Dendritic cell treated with granulocyte-macrophage colony-stimulating factor and Interleukin-4, amounts not matched to agents 40 ng/mL and 50 ng/mL, for 4 days (primary cell): ENCODE measurements at regions of chr13 and their contacts with region 1.

Region 1: GRCh38 chr13:51502153-51502651 is 49.4 kb upstream of the INTS6 start:
- H3K4me3 Mint-ChIP-seq: no peak overlapping the region
- H3K27ac Mint-ChIP-seq: peak overlapping the region; percentile 48
- H3K4me1 Mint-ChIP-seq: peaks cover 27% of the 10 kb centered on the region
- H3K27me3 Mint-ChIP-seq: peaks cover 3% of the 10 kb centered on the region

Region 2: GRCh38 chr13:51542346-51543242 is 40.4 kb after region 1 on chr13:
- intact Hi-C with region 1: loop called (anchors 5 kb)
- H3K4me3 Mint-ChIP-seq: no peak overlapping the region
- H3K27ac Mint-ChIP-seq: peak overlapping the region; percentile 23
- H3K4me1 Mint-ChIP-seq: peaks cover 36% of the 10 kb centered on the region
- H3K27me3 Mint-ChIP-seq: peaks cover 6% of the 10 kb centered on the region

Region 3: DNA sequence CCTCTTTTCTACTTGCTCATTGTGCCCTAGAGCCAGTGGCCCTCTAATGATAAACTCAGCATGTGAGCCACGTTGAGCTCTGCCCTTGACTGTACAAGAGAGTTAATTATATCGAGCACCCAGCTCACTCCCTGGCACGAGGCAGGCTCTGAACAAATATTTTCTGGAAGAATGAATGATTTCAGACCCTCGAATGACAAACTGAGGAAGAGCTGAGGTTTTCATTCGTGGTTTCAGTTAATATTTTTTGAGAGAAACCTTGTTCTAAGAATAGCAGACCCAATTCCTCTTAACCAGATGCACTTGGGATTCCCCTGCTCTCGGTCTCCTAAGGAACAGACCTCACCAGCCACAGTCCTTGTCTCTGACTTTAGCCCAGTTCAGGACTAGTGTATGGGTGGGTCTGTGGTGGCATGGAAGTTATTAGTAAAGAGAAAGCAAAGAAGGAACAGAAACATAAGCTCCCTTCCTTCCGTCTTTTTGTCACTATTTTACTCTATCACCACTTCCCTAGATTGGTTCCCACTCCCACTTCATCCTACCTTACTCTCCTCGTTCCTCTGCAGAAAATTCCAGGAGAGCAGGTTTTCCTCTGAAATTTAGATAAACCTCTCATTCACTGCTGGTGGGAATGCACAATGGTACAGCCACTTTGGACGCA is 59.9 kb after region 1 on chr13:
- intact Hi-C with region 1: no loop called
- H3K4me3 Mint-ChIP-seq: peak overlapping the region; percentile 40
- H3K27ac Mint-ChIP-seq: peak overlapping the region; percentile 79
- H3K4me1 Mint-ChIP-seq: peaks cover 78% of the 10 kb centered on the region
- H3K27me3 Mint-ChIP-seq: no peaks in the 10 kb centered on the region